ENCODE measurements at regions of chr11 and their contacts with region 1.

Region 1: DNA sequence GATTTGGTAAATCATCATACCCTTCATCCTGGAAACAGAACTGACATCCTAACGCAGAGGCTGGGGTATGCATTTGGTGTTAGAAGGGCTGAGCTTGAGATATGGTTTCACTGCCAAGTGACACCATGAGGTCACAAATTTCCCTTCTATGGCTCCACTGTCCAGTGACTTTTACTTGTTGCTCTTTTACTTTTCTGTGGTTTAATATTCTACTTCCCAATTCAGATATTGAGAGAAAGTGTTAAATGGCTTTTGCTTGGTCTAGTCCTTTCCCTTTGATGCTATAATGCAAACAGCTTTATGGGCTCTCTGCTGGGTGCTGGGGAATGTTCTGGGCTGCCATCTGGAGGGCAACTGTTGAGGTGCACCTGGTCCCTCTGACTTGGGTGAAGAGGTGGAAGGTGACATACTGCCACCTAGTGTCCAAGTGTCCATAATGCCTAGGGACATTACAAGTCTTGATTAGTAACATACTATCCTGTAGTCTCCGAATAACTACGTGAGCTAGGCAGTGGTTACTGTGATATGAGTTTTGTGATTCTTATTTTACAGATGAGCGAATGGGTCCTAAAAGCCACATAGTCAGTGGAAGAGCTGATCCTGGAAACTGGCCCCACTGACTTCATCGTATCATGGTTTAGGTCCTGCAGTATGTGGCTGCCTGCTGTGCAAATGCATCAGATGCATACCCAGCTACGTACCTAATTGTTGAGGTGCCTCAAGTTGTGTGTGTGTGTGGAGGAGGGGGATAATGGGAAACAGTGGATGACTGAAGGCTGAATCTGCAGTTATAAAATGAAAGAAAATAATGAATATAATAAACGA is 149.1 kb upstream of the RAG2 start:
- DNase-seq: peak; percentile 61 to 87
- ATAC-seq: peak; percentile 89 to 97 (median 94)
- H3K4me3 ChIP-seq: no peak overlapping the region
- H3K27ac ChIP-seq: no peak overlapping the region
- H3K4me1 ChIP-seq: peaks cover 0 to 7% (median 0%) of the 10 kb centered on the region in 9 donors
- H3K27me3 ChIP-seq: peaks cover 0 to 32% (median 4%) of the 10 kb centered on the region in 7 donors
- CTCF ChIP-seq: peak; percentile 80 to 99 (median 98)

Region 2: DNA sequence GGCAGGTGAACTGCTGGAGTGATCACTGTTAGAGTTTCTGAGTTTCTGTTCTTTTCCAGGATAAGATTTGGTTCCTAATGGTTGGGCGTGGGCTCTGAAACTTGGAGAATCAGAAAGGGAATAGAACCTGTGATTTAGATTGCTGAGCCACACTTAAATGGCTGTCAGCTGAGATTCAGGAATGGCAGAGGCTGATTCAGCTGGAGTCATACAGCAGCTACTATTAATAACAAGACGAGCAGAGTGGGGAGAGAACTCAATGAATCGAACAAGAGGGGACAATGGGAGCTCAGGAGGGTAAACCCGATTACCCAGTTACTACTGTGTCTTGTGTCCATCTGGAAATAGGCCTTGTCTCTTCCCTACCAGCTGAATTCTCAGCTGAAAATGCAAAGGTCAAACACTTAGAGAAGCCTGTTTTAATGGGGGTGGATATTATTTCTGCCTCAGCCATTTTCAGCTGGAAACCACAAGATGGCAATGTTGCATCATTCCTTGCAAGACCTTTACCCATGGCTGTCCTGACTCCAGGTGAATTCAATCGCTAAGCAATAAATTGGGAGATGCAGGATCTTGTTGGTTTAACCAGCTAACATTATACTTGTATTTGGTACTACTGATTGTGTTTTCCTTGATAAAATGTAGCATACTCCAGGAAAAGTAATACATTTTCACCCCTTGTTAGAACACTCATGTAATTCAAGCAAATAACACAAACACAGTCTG is 44.6 kb before region 1 on chr11:
- intact Hi-C with region 1: loop called in 8 of 10 experiments (anchors 1 to 5 kb)
- DNase-seq: peak in 1 of 2 donors; percentile 37
- ATAC-seq: peak; percentile 84 to 97 (median 90)
- H3K4me3 ChIP-seq: no peak overlapping the region
- H3K27ac ChIP-seq: peak overlapping the region in 4 of 10 donors; percentile 17 to 60 (median 53)
- H3K4me1 ChIP-seq: no peaks in the 10 kb centered on the region
- H3K27me3 ChIP-seq: peaks cover 0 to 7% (median 0%) of the 10 kb centered on the region in 7 donors
- CTCF ChIP-seq: peak; percentile 59 to 87 (median 80)

Region 3: DNA sequence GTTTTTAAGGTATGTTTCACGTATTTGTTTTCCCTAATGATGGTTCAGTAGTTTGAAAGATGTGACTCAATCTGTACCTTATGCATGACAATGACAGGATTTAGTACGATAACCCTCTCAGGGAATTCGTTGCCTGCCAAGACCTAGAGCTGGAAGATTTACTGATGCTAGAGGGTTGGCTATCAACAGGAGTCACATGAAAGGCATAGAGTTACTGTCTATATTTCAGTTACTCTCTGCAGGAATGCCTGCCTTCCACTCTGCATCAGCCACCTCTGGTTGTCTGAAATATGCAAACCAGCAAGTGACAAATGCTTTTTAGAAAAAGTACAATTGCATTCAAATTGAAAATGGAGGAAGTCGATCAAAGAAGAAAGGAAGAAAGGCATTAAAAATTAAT is 127.2 kb after region 1 on chr11:
- intact Hi-C with region 1: no loop called
- DNase-seq: no peak
- ATAC-seq: no peak
- H3K4me3 ChIP-seq: no peak overlapping the region
- H3K27ac ChIP-seq: no peak overlapping the region
- H3K4me1 ChIP-seq: no peaks in the 10 kb centered on the region
- H3K27me3 ChIP-seq: no peaks in the 10 kb centered on the region
- CTCF ChIP-seq: no peak

Measured in heart right ventricle (tissue), 16 donors.